ENCODE measurements at regions of chr12 and their contacts with region 1.

Region 1: DNA sequence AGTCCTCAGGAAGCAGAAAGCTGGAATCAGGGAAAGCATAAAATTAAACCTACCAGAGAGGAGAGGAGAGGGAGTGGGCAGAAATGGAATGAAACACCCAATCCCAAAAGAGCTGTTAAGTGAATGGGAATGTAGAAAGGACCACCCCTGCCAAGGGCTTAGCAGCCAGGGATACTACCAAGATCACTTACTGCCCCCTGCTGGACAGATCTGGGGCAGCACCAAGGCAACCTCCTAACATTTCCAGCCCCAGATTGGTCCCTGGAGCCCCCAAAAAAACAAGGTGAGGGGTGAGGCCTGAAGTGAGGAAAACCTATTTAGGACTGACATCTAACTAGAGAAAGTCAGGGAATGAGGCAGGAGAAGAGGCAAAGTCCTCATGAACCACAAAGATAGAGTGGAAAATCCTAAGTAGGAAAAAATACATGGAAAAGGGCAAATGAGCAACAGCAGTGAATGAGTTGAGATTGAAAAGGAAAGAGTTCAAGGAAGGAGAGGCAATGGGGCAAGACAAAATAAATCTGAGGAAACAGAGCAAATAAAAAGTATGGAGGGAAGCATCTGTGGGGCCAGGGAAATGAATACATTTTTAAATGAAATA is 11.2 kb upstream of the FKBP11 start:
- DNase-seq: peak; percentile 88
- ATAC-seq: peak; percentile 57
- H3K4me3 Mint-ChIP-seq: no peak overlapping the region
- H3K27ac Mint-ChIP-seq: peak overlapping the region; percentile 39
- H3K4me1 Mint-ChIP-seq: peaks cover 28% of the 10 kb centered on the region
- H3K27me3 Mint-ChIP-seq: no peaks in the 10 kb centered on the region

Region 2: DNA sequence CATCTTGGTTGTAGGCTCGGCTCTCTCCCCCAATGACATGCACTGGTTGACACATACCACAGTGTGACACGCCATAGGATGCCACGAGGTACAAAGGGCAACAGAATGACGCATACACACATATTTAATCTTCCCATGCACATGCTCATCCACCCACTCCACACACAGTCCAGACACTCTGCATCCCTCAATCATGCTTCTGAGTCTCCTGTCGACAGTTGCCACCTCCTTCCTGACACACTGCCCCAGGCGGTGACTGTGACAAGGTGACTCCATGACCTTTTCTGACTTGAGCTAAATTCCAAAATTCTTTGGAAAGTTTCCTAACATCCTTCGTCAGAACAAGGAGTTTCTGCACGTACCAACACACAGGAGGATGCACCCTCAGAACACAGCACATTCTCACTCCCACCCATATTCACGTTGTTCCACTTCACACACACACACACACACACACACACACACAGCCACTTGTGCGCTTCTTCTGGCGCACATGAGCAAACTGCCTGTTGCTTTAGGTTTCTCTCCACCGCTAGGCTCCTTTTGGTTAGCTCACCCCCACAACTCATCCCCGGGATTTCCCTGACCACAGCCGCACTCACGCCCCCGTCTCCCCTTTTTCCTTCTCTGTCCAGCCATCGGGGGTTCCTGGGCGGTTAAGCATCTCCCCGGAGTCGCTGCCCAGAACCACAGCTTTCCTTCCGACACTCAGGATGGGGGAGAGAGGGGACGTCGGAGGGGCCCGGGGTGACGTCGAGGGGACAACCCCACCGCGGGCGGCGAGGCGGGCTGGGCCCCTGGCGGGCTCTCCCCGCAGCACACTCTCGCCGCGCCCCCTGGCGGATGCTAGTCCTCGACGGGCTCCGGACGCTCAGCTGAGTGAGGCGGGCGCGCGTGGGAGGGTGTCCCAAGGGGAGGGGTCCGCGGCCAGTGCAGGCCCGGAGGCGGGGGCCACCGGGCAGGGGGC is 41.1 kb after region 1 on chr12:
- CTCF ChIA-PET with region 1: interaction called, 16 read pairs
- DNase-seq: peak; percentile 81
- ATAC-seq: peak; percentile 62
- H3K4me3 Mint-ChIP-seq: peak overlapping the region; percentile 22
- H3K27ac Mint-ChIP-seq: no peak overlapping the region
- H3K4me1 Mint-ChIP-seq: peaks cover 55% of the 10 kb centered on the region
- H3K27me3 Mint-ChIP-seq: peaks cover 84% of the 10 kb centered on the region

Region 3: DNA sequence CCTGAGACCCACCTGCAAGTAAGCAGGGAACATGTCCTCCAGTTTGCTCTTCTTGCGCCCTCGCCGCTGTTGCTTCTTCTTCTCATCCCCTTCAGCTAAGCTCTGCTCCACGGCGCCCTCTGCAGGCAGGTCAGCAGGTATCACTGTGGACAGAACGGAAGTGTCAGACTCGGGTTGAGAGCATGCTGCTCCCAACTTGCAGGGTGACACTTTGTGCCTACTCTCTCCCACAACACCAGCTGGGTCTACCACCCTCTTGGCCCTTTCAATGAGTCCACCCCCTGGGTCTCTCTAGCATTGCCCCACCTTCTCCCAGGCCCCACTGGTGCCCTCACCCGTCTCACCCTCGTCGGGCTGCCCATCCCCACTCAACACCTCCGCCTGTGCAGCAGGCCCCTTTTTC is 107.4 kb after region 1 on chr12:
- CTCF ChIA-PET with region 1: no interaction called
- DNase-seq: peak; percentile 87
- ATAC-seq: peak; percentile 87
- H3K4me3 Mint-ChIP-seq: no peak overlapping the region
- H3K27ac Mint-ChIP-seq: peak overlapping the region; percentile 0
- H3K4me1 Mint-ChIP-seq: peaks cover 8% of the 10 kb centered on the region
- H3K27me3 Mint-ChIP-seq: no peaks in the 10 kb centered on the region

Region 4: GRCh38 chr12:49110464-49111155 is 174.1 kb after region 1 on chr12 and contains the start of gene LMBR1L:
- CTCF ChIA-PET with region 1: no interaction called
- DNase-seq: peak; percentile 99
- ATAC-seq: peak; percentile 97
- H3K4me3 Mint-ChIP-seq: peak within 1 kb of the TSS; percentile 94
- H3K27ac Mint-ChIP-seq: peak within 1 kb of the TSS; percentile 87
- H3K4me1 Mint-ChIP-seq: peaks cover 28% of the 10 kb centered on the region
- H3K27me3 Mint-ChIP-seq: no peaks in the 10 kb centered on the region
- total RNA-seq, gene LMBR1L: 46.9 to 53.4 TPM